Calu3 (cell line): ENCODE measurements at regions of chr3 and their contacts with region 1.

Region 1: DNA sequence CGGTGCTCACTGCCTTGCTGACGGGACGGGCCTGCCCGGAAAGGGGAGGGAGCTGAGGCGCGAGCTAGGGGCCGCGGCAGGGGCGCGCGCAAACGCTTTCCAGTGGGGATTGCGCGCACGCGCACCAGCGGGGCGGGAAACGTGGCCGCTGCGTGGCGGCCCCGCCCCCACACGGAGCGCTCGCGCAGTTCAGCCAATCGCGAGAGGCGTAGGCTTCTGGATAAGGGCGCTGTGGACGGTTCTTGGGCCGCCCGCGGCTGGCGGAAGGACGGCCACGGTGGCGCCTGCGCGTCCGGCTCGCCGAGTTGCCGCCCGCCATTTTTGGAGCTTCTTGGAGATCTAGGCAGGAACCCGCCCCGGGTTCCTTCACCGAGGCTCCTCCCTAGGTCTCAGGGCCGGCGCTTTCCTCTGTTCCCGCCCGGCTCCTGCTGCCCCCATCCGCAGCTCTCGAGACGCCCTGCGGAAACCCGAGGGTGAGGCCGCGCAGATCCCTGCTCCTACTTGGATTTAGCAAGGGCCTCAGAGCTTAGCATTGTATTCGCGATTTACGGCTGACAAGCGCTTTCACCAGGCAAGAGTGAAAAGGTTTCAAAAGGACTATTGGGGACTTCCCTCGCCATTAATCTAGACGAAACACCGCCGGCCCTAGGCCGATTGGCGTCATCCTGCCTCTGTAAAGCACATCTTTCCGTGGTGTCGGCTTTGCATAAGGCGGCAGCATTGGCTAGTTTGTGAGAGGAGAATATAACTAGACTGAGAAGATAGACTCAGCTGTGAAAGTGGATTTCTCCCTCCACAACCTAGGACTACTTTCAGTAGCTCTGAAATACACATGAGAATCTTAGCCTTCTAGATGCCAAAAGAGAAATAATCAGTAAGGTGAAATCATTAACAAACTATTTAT is 496 bp upstream of the STAG1 start:
- DNase-seq: peak; percentile 100
- H3K4me3 Mint-ChIP-seq: peak overlapping the region; percentile 73
- H3K27ac Mint-ChIP-seq: peak overlapping the region; percentile 67
- H3K4me1 Mint-ChIP-seq: peaks cover 44% of the 10 kb centered on the region
- H3K27me3 Mint-ChIP-seq: no peaks in the 10 kb centered on the region
- CTCF ChIP-seq: no peak

Region 2: GRCh38 chr3:136305878-136306277 is 446.8 kb before region 1 on chr3:
- CTCF ChIA-PET with region 1: interaction called, 28 read pairs
- intact Hi-C with region 1: loop called (anchors 2 kb)
- DNase-seq: peak; percentile 33
- H3K4me3 Mint-ChIP-seq: no peak overlapping the region
- H3K27ac Mint-ChIP-seq: no peak overlapping the region
- H3K4me1 Mint-ChIP-seq: no peaks in the 10 kb centered on the region
- H3K27me3 Mint-ChIP-seq: no peaks in the 10 kb centered on the region
- CTCF ChIP-seq: peak; percentile 65

Region 3: GRCh38 chr3:136396916-136397315 is 355.8 kb before region 1 on chr3:
- CTCF ChIA-PET with region 1: interaction called, 113 read pairs
- intact Hi-C with region 1: no loop called
- DNase-seq: no peak
- H3K4me3 Mint-ChIP-seq: no peak overlapping the region
- H3K27ac Mint-ChIP-seq: no peak overlapping the region
- H3K4me1 Mint-ChIP-seq: no peaks in the 10 kb centered on the region
- H3K27me3 Mint-ChIP-seq: no peaks in the 10 kb centered on the region
- CTCF ChIP-seq: no peak

Region 4: DNA sequence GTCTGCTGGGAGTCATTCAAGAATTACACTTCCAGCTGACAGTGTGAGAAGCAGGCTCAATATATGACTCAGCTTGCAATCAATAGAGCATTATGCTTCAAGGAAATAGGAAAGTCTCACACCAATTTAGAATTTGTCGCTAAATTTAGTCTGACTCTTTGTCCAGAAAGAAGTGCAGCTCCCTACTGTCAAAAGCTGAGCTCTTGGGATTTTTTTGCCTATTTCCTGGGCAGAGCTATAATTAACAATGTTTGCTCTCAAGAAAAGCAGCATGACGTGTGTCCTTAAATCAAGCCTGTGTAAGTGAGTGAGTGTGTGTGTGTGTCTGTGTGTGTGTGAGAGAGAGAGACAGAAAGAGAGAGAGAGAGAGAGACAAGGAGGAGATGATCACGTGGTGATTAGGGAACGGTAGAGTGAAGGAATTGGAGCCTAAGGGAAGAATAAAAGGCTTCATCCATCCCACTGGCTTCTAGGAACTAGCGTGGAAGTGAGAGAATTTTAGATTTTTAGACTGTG is 49.9 kb after region 1 on chr3:
- CTCF ChIA-PET with region 1: interaction called, 14 read pairs
- intact Hi-C with region 1: no loop called
- DNase-seq: peak; percentile 67
- H3K4me3 Mint-ChIP-seq: peak overlapping the region; percentile 64
- H3K27ac Mint-ChIP-seq: peak overlapping the region; percentile 98
- H3K4me1 Mint-ChIP-seq: peaks cover 36% of the 10 kb centered on the region
- H3K27me3 Mint-ChIP-seq: no peaks in the 10 kb centered on the region
- CTCF ChIP-seq: no peak

Region 5: GRCh38 chr3:136938334-136938733 is 185.7 kb after region 1 on chr3:
- CTCF ChIA-PET with region 1: interaction called, 10 read pairs
- intact Hi-C with region 1: no loop called
- DNase-seq: no peak
- H3K4me3 Mint-ChIP-seq: peak overlapping the region; percentile 12
- H3K27ac Mint-ChIP-seq: peak overlapping the region; percentile 41
- H3K4me1 Mint-ChIP-seq: peaks cover 54% of the 10 kb centered on the region
- H3K27me3 Mint-ChIP-seq: no peaks in the 10 kb centered on the region
- CTCF ChIP-seq: no peak

Region 6: GRCh38 chr3:137032465-137033120 is 279.9 kb after region 1 on chr3:
- CTCF ChIA-PET with region 1: interaction called, 13 read pairs
- intact Hi-C with region 1: no loop called
- DNase-seq: peak; percentile 98
- H3K4me3 Mint-ChIP-seq: peak overlapping the region; percentile 66
- H3K27ac Mint-ChIP-seq: no peak overlapping the region
- H3K4me1 Mint-ChIP-seq: peaks cover 17% of the 10 kb centered on the region
- H3K27me3 Mint-ChIP-seq: peaks cover 7% of the 10 kb centered on the region
- CTCF ChIP-seq: peak; percentile 99

Region 7: DNA sequence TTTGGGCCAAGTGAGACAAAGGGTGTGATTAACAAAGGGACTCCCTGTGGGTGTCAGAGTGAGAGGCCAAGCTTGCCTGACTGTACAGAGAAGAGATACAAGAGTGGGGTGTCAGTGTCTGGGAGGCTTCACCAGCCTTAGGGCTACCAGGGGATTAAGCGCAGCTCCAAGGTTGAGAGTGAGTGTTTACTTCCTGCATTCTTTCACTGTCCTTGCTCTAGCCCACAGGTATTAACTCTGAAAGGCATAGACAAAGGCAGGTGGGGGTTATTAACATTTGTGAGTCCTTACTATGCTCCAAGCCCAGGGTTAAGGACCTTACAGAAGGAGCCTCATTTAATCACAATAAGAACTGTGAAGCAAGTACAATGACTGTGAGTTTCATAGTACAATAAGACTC is 312.7 kb after region 1 on chr3:
- CTCF ChIA-PET with region 1: no interaction called
- intact Hi-C with region 1: no loop called
- DNase-seq: peak; percentile 24
- H3K4me3 Mint-ChIP-seq: peak overlapping the region; percentile 17
- H3K27ac Mint-ChIP-seq: peak overlapping the region; percentile 9
- H3K4me1 Mint-ChIP-seq: peaks cover 8% of the 10 kb centered on the region
- H3K27me3 Mint-ChIP-seq: peaks cover 34% of the 10 kb centered on the region
- CTCF ChIP-seq: no peak